ENCODE measurements at regions of chr11 and their contacts with region 1.

Region 1: GRCh38 chr11:85941380-85941973 is 86.3 kb downstream of the CCDC83 start:
- DNase-seq: peak; percentile 48 to 72 (median 65)
- H3K4me3 ChIP-seq: no peak overlapping the region
- H3K27ac ChIP-seq: no peak overlapping the region
- H3K4me1 ChIP-seq: peaks cover 2% of the 10 kb centered on the region
- H3K27me3 ChIP-seq: no peaks in the 10 kb centered on the region
- CTCF ChIP-seq: peak; percentile 68 to 88 (median 71)
- EP300 ChIP-seq: no peak
- POLR2A ChIP-seq: no peak

Region 2: GRCh38 chr11:86035164-86035563 is 93.7 kb after region 1 on chr11:
- intact Hi-C with region 1: loop called in 2 of 4 experiments (anchors 5 to 10 kb)
- DNase-seq: no peak
- H3K4me3 ChIP-seq: no peak overlapping the region
- H3K27ac ChIP-seq: no peak overlapping the region
- H3K4me1 ChIP-seq: peaks cover 9% of the 10 kb centered on the region
- H3K27me3 ChIP-seq: no peaks in the 10 kb centered on the region
- CTCF ChIP-seq: no peak
- EP300 ChIP-seq: no peak
- POLR2A ChIP-seq: no peak

Region 3: DNA sequence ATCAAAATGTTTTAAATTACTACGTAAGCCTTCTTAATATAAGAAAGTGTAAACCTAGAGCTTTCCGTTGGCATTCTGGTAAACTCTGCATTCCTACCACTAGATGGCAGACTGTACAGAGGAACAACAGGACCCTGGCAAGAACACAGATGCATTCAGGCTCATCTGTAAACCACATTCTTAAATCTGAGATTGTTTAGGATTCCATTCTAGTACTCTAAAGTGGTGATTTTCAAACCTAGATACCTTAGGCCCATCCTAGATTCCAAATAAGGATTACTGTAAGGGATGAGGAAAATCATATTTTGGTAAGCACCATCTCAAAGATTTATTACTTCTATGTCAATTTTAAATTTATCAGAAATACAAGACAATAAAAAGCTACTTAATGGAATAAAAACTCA is 100.5 kb after region 1 on chr11:
- intact Hi-C with region 1: loop called in 2 of 4 experiments (anchors 5 to 10 kb)
- DNase-seq: peak in 4 of 5 donors; percentile 42 to 83 (median 61)
- H3K4me3 ChIP-seq: peak overlapping the region; percentile 6
- H3K27ac ChIP-seq: peak overlapping the region in 1 of 2 donors; percentile 47
- H3K4me1 ChIP-seq: peaks cover 3% of the 10 kb centered on the region
- H3K27me3 ChIP-seq: no peaks in the 10 kb centered on the region
- CTCF ChIP-seq: peak; percentile 83 to 96 (median 96)
- EP300 ChIP-seq: no peak
- POLR2A ChIP-seq: no peak

Region 4: DNA sequence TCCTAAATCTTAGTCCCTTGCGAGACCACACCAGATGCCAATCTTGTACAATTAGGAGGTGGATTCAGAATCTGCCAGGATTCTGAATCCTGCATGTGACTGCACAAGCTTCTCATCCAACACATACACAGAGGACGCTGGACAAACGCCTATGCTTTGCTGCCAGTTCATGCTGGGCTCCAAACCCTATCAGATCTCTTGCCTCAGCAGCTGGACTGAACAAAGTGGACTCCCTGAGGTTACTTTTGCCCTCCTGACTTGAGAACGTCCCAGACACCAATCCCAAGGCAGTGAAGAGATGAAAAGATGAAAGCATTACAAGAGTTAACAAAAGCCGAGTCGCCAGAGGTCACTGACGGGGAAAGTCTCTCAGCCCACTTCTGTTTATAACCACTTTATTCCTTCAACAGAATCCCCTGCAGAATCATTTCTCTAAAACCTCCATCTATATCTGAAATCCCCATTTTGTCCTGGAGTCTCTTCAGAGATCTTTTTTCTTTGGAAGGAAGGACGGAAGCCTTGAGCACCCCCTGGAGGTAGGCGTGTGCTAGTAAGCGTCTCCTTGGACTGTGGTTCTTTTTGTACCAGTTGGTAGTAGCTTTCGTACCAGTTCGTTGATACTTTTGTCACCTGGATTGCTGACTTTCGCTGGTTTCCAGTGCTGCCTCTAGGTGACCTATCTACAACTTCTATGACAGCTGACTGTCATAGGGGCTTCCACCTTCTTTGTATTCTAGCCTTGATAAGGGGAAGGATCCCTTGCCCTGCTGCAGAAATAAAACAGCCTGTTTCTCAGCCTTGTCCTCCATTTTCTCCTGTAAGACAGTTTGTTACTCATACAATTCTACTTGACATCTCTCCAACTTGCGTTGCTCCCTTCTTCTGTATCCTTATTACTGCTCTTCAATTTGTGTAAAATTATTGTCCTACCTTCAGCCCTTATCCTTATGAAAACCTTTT is 276.9 kb after region 1 on chr11:
- intact Hi-C with region 1: loop called (anchors 5 to 10 kb)
- DNase-seq: peak; percentile 59 to 78 (median 77)
- H3K4me3 ChIP-seq: no peak overlapping the region
- H3K27ac ChIP-seq: no peak overlapping the region
- H3K4me1 ChIP-seq: no peaks in the 10 kb centered on the region
- H3K27me3 ChIP-seq: no peaks in the 10 kb centered on the region
- CTCF ChIP-seq: peak; percentile 71 to 85 (median 74)
- EP300 ChIP-seq: no peak
- POLR2A ChIP-seq: no peak

Region 5: DNA sequence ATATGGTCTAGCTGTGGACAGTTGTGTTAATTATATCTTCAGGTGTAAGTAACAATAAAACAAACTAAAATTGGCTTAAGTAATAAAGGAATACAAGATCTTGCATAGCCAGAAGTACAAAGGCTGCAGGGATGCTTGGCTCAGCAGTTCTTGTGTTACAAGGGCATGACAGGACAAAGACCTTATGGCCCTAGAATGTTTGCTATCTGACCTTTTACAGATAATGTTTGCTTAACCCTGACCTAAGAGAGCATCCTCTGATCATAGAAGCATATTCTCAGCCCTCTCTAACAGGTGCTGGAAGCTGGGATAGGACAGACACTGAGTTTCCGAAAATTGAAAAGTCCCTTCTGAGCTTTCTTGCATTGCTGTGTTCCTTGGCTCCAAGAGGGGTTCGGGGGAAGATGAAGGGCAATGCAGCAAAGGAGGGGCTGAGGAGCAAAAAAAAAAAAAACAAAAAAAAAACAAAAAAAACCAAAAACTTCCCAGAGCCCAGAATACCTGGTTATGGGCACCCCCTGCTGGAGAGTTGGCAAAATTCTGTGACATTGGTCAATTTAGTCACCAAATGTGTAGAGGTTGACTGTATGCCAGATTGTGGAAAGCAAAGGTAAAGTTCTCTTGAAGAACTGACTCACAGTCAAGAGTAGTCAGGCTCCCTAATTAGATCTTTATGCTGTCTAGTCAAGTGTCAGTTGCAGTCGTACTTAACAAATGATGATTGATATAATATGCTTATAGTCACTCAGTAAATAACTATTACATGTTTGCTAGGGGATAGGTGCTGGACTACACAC is 350.2 kb after region 1 on chr11:
- intact Hi-C with region 1: loop called (anchors 2 to 10 kb)
- DNase-seq: peak in 4 of 5 donors; percentile 15 to 68 (median 49)
- H3K4me3 ChIP-seq: no peak overlapping the region
- H3K27ac ChIP-seq: no peak overlapping the region
- H3K4me1 ChIP-seq: no peaks in the 10 kb centered on the region
- H3K27me3 ChIP-seq: no peaks in the 10 kb centered on the region
- CTCF ChIP-seq: peak; percentile 29 to 55 (median 36)
- EP300 ChIP-seq: no peak
- POLR2A ChIP-seq: no peak

Region 6: DNA sequence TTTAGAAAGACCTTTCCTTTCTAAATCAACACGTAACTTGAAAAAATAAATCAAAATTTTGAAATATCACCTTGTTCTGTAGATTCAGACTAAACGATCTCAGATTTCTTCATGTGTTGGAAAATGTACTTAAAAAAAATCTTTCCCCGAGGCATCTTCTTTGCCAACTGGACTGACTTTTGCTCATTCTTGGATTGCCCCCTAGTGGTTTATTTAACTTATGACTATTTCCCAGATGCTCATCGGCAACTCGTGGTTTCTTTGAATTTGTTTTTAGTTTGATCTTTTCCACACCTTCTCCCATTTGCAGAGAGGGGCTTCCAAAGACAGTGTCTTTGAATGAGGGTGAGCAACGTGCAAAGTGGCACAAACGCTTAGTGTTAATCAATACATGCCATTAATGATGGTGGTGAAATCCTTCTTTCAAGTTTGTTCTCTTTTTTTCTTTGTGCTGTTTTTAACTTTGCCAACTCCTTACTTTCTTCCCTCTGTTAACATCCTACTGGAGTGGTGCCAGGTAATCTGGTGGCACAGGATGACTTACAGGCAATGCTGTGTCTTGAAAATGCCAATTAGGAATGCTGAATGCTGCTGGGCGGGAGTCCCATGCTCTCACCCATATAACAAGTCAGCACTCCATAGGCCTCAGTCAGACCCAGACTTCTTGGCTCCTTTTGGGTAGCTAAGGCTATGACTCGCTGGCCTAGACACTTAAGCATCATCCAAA is 877.2 kb after region 1 on chr11:
- intact Hi-C with region 1: loop called in 1 of 4 experiments (anchors 10 kb)
- DNase-seq: no peak
- H3K4me3 ChIP-seq: no peak overlapping the region
- H3K27ac ChIP-seq: no peak overlapping the region
- H3K4me1 ChIP-seq: peaks cover 1% of the 10 kb centered on the region
- H3K27me3 ChIP-seq: no peaks in the 10 kb centered on the region
- CTCF ChIP-seq: peak; percentile 37 to 89 (median 87)
- EP300 ChIP-seq: no peak
- POLR2A ChIP-seq: no peak

Measured in ovary (tissue), 10 donors.